Aorta (tissue), 5 donors: ENCODE measurements at regions of chr3 and their contacts with region 1.

Region 1: DNA sequence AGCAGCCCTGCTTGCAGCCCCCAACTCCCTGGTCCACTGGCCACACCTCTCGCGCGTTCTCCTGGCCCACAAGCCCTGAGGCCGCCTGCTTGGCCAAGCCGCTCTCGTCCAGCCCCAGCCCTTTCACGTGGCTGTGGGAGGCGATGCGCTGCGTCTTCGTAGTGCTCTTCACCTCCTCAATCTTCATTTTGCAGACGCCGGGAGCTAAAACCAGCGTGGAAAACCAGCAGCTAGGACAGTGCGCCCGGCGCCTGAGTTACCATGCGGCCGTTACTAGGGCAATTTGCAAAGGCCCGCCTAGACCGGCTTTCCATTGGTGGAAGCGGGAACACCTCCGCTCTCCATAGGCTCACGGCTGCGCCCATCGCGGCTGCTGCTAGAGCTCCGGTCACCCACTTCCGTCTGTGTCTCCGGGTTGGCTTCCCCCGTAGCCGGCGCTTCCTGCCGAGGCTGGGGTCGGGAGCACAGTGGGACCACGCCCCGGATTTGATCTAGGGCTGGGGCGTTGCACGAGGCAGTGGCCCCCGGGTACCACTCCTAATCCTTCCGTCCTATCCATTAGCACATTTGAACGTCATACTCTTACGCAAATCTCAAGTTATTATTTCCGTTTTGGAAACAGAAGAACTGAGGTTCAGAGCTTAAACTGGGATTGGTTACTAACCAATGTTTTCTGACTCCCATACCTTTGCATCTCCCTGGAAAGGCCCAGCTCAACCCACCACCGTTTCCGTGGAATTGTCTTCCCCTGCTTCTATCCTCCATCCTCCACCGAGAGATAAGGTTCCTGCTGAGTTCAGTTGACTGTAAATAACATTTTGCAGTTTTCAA is at the start of gene RUVBL1:
- DNase-seq: peak; percentile 98 to 99
- ATAC-seq: peak; percentile 99
- H3K4me3 ChIP-seq: peak within 1 kb of the TSS; percentile 60 to 68
- H3K27ac ChIP-seq: peak within 1 kb of the TSS in 1 of 2 donors; percentile 9
- H3K4me1 ChIP-seq: no peaks in the 10 kb centered on the region
- H3K27me3 ChIP-seq: peaks cover 0 to 1% of the 10 kb centered on the region in 2 donors
- total RNA-seq, gene RUVBL1: 15.4 to 17.5 TPM

Region 2: GRCh38 chr3:128153156-128154041 is 29.6 kb after region 1 on chr3 and contains the start of gene EEFSEC:
- intact Hi-C with region 1: loop called in 1 of 2 experiments (anchors 2 kb)
- DNase-seq: peak; percentile 87 to 95
- ATAC-seq: peak; percentile 94
- H3K4me3 ChIP-seq: peak within 1 kb of the TSS; percentile 14 to 88
- H3K27ac ChIP-seq: peak within 1 kb of the TSS in 1 of 2 donors; percentile 46
- H3K4me1 ChIP-seq: no peaks in the 10 kb centered on the region
- H3K27me3 ChIP-seq: no peaks in the 10 kb centered on the region
- total RNA-seq, gene EEFSEC: 9.8 to 13.5 TPM

Region 3: GRCh38 chr3:128464188-128464587 is 340.4 kb after region 1 on chr3:
- intact Hi-C with region 1: no loop called
- DNase-seq: no peak
- ATAC-seq: no peak
- H3K4me3 ChIP-seq: no peak overlapping the region
- H3K27ac ChIP-seq: no peak overlapping the region
- H3K4me1 ChIP-seq: no peaks in the 10 kb centered on the region
- H3K27me3 ChIP-seq: no peaks in the 10 kb centered on the region